ENCODE measurements at regions of chr14 and their contacts with region 1.

Region 1: DNA sequence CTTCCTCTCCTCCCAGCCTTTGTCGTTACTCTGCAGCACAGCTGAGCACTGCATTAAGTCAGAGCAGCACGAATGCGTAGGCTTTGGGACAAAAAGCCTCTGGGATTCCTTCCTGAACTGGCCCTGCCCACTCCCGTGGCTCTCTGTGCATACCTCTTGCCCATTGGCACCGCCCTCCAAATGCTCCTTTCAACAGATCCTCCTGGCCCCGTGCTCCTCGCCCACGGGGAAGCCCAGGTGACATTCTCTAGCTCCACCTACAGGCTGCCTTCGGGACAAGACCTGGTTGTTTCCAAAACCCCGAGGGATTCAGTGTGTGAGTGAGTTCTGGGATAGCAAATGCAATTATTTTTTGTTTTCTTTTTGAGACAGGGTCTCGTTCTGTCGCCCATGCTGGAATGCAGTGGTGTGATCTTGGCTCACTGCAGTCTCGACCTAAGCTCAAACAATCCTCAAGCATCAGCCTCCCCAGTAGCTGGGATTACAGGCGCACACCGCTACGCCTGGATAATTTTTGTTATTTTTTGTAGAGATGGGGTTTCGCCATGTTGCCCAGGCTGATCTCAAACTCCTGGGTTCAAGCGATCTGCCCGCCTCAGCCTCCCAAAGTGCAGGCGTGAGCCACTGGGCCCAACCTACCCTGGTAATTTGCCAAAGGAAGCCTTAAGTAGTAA is 17.9 kb upstream of the TDRD9 start:
- DNase-seq: peak; percentile 70
- H3K4me3 Mint-ChIP-seq: peak overlapping the region; percentile 5
- H3K27ac Mint-ChIP-seq: peak overlapping the region; percentile 62
- H3K4me1 Mint-ChIP-seq: peaks cover 11% of the 10 kb centered on the region
- H3K27me3 Mint-ChIP-seq: no peaks in the 10 kb centered on the region

Region 2: DNA sequence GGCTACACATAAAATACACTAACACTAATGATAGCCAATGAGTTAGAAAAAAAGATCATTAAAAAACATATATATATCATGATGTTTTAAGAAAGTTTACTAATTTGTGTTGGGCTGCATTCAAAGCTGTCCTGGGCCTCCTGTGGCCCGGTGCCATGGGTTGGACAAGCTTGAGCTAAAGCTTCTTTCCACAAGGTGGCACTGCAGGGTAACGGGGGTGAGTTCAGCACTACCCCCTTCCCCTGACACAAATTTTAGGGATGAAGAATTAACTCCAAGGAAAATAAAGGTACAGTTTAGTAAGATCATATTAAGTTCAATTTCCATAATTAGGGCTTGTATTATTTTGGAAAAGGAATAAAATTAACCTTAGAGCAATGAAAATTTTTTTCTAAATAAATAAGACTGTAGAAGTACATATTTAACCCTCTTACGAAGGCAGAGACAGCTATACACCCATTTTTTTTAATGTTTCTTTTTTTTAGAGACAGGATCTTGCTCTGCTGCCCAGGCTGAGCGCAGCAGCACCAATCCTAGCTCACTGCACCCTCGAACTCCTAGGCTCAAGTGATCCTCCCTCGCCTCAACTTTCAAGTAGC is 101.9 kb before region 1 on chr14:
- CTCF ChIA-PET with region 1: interaction called, 44 read pairs
- POLR2A ChIA-PET with region 1: interaction called, 4 read pairs
- DNase-seq: peak; percentile 66
- H3K4me3 Mint-ChIP-seq: no peak overlapping the region
- H3K27ac Mint-ChIP-seq: no peak overlapping the region
- H3K4me1 Mint-ChIP-seq: peaks cover 13% of the 10 kb centered on the region
- H3K27me3 Mint-ChIP-seq: no peaks in the 10 kb centered on the region

Region 3: DNA sequence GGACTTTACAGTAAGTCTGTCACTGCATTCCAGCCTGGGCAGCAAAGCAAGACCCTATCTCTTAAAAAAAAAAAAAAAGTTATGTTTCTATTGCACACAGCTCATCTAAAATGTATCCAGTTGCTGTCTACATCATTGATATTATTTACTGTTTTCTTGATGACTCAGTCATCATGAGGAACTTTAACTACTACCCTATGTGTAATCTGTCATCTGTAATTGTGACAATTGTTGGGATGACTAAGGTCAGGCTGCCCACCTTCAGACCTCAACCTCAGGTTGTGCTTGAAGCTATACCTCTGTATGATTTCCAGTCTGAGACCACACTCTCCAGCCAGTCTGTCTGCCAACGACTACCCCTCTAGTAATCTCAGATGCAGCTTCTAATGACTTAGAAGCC is 78.4 kb before region 1 on chr14:
- CTCF ChIA-PET with region 1: no interaction called
- POLR2A ChIA-PET with region 1: no interaction called
- DNase-seq: no peak
- H3K4me3 Mint-ChIP-seq: no peak overlapping the region
- H3K27ac Mint-ChIP-seq: no peak overlapping the region
- H3K4me1 Mint-ChIP-seq: no peaks in the 10 kb centered on the region
- H3K27me3 Mint-ChIP-seq: no peaks in the 10 kb centered on the region

Region 4: GRCh38 chr14:103920981-103921854 is 10.8 kb after region 1 on chr14:
- CTCF ChIA-PET with region 1: interaction called, 26 read pairs
- POLR2A ChIA-PET with region 1: no interaction called
- DNase-seq: peak; percentile 95
- H3K4me3 Mint-ChIP-seq: peak overlapping the region; percentile 93
- H3K27ac Mint-ChIP-seq: peak overlapping the region; percentile 68
- H3K4me1 Mint-ChIP-seq: peaks cover 12% of the 10 kb centered on the region
- H3K27me3 Mint-ChIP-seq: peaks cover 12% of the 10 kb centered on the region

Region 5: DNA sequence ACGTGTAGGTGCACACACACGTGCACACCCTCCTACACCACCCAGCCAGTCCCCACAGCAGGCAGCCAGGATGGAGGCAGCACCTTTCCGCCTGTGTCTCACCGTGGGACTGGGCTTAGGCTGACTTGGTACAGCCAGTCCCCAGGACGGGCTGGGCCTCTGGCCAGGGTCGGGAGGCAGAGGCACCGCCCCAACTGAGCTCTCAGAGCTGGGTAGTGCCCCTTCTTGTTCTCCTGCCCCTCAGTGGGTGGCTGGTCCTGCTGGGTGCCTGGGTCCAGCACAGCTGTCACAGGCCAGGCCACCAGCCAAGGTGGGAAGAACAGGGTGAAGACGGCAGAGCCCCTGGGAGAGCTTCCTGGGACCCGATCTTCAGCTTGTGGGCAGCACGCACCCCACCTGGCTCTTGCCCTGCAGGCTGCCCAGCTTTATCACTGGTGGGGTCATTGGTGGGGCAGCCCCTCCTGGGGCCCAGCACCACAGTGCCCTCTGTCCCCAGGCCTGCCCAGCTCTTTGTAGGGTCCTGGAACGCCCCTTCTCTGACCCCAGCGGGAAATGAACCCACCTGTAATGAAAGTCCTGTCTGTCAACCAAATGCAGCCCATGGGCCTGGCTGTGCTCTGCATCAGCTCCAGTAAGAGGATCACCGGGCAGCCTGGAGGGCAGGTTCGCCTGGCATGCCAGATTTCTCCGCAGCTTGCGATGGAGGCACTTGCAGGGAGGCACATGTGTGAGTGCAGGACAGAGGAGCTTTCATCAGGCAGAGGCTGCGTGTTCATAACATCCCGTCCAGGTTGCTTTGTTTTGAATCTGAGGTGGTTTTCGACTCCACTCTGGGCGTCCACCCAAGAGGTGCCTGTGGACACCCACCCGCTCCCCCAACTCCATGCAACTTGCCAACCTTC is 1095.8 kb after region 1 on chr14:
- CTCF ChIA-PET with region 1: no interaction called
- POLR2A ChIA-PET with region 1: no interaction called
- DNase-seq: no peak
- H3K4me3 Mint-ChIP-seq: no peak overlapping the region
- H3K27ac Mint-ChIP-seq: no peak overlapping the region
- H3K4me1 Mint-ChIP-seq: peaks cover 5% of the 10 kb centered on the region
- H3K27me3 Mint-ChIP-seq: no peaks in the 10 kb centered on the region

Measured in activated CD4-positive, alpha-beta memory T cell treated with anti-CD3 and anti-CD28 coated beads, Interleukin-2, amount 10 ng/mL, durations not matched to agents 7 days and 5 days (primary cell).